Activated CD4-positive, alpha-beta T cell treated with anti-CD3 and anti-CD28 coated beads for 36 hours (primary cell): ENCODE measurements at regions of chr11 and their contacts with region 1.

Region 1: GRCh38 chr11:67630228-67630942 is 648 bp upstream of the NUDT8 start:
- DNase-seq: peak; percentile 99
- ATAC-seq: peak; percentile 79
- H3K4me3 Mint-ChIP-seq: peak overlapping the region; percentile 79
- H3K27ac Mint-ChIP-seq: peak overlapping the region; percentile 73
- H3K4me1 Mint-ChIP-seq: peaks cover 7% of the 10 kb centered on the region
- H3K27me3 Mint-ChIP-seq: no peaks in the 10 kb centered on the region

Region 2: GRCh38 chr11:67583247-67584204 is 46.9 kb before region 1 on chr11 and contains the start of gene GSTP1:
- CTCF ChIA-PET with region 1: interaction called, 4 read pairs
- POLR2A ChIA-PET with region 1: no interaction called
- intact Hi-C with region 1: loop called in 1 of 2 experiments (anchors 1 kb)
- DNase-seq: peak; percentile 90
- ATAC-seq: peak; percentile 85
- H3K4me3 Mint-ChIP-seq: peak within 1 kb of the TSS; percentile 89
- H3K27ac Mint-ChIP-seq: peak within 1 kb of the TSS; percentile 94
- H3K4me1 Mint-ChIP-seq: peaks cover 52% of the 10 kb centered on the region
- H3K27me3 Mint-ChIP-seq: peaks cover 10% of the 10 kb centered on the region
- total RNA-seq, gene GSTP1: 376 to 463 TPM

Region 3: DNA sequence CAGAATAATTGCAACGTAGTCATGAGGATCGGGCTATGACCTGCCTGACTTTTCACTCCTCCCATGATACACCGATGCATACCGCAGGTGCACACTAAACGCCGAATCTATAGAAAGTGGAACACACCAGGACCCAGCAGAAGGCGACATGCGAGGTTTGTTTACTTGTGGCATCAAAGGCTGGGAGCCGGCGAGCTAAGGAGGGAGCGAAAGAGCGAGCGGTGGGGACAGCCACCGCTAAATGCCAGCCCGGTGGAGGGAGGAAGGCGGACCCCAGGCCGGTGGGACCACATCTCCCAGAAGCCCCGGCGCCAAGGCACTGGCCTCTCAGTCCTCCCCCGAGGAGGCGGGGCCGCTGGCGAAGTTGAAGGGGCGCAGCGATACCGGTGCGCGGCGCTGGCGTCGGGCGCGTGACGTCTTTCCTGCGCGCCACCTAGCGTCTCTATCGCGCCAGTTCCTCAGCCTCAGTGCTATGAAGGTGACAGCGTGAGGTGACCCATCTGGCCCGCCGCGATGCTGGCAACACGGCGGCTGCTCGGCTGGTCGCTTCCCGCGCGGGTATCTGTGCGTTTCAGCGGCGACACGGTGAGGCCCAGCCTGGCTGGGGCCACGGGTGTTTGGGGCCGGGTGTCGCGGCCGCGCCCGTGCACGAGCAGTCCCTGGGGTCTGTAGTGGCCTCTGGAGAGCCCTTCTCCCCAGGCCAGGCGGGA is 23.7 kb before region 1 on chr11 and contains the start of gene NDUFV1:
- CTCF ChIA-PET with region 1: interaction called, 6 read pairs
- POLR2A ChIA-PET with region 1: no interaction called
- intact Hi-C with region 1: loop called (anchors 1 kb)
- DNase-seq: peak; percentile 98
- ATAC-seq: peak; percentile 100
- H3K4me3 Mint-ChIP-seq: peak within 1 kb of the TSS; percentile 92
- H3K27ac Mint-ChIP-seq: peak within 1 kb of the TSS; percentile 90
- H3K4me1 Mint-ChIP-seq: peaks cover 16% of the 10 kb centered on the region
- H3K27me3 Mint-ChIP-seq: peaks cover 9% of the 10 kb centered on the region
- total RNA-seq, gene NDUFV1: 253 to 287 TPM

Region 4: DNA sequence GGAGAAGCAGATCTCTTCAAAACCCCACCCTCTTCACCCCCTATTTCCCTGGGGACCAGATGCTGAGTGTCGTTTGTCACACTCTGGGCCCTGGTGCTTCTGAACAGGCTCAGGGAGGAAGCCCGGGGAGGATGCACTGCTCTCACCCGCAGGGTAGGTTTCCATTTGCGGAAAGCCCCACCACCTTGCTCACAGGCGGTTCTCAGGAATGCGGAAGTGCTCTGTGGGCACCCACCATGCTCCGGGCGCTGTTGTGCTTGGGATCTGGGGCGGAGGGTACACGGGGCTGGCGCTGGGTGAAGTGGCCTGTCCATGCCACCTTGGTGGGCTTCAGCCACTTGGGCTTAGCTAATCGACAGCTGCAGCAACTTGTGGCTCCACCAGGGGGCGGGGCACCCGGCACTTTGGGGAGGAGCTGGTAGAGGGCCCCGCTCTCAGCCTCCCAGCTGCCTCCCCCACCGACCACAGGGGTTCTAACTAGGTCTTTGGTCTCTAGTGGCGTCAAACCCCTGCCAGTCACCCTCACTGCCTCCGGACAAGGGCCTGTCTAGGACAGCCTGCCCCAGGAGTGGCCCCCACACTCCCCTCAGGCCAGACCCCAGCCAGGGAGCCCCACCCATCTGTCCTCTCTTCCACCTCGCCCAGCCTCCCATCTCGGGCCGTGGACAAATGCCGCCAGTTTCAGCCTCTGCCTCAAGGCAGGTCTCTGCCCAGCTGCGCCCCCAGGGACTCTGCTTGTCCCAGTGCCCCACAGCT is 16.2 kb before region 1 on chr11:
- CTCF ChIA-PET with region 1: interaction called, 67 read pairs
- POLR2A ChIA-PET with region 1: interaction called, 3 read pairs
- intact Hi-C with region 1: loop called (anchors 1 to 2 kb)
- DNase-seq: peak; percentile 92
- ATAC-seq: peak; percentile 90
- H3K4me3 Mint-ChIP-seq: peak overlapping the region; percentile 67
- H3K27ac Mint-ChIP-seq: peak overlapping the region; percentile 93
- H3K4me1 Mint-ChIP-seq: peaks cover 22% of the 10 kb centered on the region
- H3K27me3 Mint-ChIP-seq: no peaks in the 10 kb centered on the region

Region 5: DNA sequence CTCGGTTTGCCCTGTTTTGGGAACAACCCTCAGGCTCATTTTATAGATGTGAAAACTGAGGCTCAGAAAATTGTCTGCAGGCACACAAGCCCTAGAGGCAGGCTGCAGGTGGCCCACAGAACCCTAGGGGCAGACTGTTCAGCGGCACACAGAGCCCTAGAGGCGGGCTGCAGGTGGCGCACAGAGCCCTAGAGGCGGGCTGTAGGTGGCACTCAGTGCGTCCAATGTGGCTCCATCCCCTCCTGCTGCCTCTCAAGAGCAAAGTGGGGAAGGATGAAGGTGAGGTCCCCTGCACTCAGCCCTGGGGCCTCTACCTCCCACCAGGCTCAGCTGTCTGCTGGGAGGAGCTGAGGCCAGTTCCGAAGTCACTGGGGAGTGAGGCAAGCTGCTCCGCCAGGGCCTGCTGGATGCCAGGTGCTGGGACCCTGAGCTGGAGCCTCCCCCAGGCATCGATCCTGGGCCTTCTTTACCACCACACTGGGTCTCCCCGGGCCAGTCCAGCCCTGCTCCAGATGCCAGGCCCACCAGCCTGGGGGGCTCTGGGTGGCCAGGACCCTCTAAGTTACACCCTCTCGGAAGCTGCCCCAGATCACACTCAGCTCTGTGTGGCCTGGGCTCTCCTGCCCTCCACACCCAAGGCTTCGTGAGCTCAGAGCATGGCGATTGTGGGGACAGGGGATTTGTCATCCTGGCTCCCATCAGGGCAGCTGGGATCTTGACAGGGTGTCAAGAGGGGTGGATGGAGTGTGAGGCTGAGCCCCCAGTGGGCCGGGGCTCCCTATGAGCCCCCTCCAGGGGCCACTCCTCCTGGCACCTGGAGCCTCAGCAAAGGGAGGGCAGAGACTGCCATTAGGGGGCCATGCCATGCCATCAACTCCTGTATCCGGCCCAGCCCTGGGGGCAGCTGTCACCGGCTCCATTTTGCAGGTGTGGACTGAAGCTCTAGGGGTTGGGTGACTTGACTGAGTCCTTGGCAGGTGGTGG is 18.0 kb after region 1 on chr11:
- CTCF ChIA-PET with region 1: interaction called, 9 read pairs
- POLR2A ChIA-PET with region 1: interaction called, 4 read pairs
- intact Hi-C with region 1: loop called in 1 of 2 experiments (anchors 1 kb)
- DNase-seq: peak; percentile 84
- ATAC-seq: peak; percentile 93
- H3K4me3 Mint-ChIP-seq: no peak overlapping the region
- H3K27ac Mint-ChIP-seq: no peak overlapping the region
- H3K4me1 Mint-ChIP-seq: peaks cover 36% of the 10 kb centered on the region
- H3K27me3 Mint-ChIP-seq: no peaks in the 10 kb centered on the region

Region 6: DNA sequence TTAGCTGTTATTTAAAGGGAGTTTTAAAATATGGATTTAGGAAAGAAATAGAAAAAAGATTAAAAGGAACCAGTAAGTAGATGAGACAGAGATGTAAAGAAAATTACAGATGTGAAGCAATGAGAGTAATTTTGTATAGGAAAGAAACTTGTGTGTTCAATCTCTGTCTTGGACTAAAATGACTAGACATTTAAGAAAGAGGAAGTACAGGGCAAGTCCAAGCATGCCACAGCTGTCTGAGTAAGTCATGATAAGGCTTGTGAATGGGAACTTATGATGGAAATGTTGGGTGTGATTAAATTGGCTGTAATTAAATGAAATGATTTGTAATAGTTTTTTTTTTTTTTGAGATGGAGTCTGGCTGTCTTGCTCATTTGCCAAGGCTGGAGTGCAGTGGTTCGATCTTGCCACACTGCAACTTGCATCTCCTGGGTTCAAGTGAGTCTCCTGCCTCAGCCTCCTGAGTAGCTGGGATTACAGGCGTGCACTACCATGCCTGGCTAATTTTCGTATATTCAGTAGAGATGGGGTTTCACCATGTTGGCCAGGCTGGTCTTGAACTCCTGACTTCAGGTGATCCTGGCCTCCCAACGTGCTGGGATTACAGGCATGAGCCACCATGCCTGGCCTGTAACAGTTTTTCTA is 26.0 kb after region 1 on chr11:
- CTCF ChIA-PET with region 1: interaction called, 42 read pairs
- POLR2A ChIA-PET with region 1: interaction called, 4 read pairs
- intact Hi-C with region 1: loop called (anchors 1 kb)
- DNase-seq: no peak
- ATAC-seq: peak; percentile 37
- H3K4me3 Mint-ChIP-seq: no peak overlapping the region
- H3K27ac Mint-ChIP-seq: no peak overlapping the region
- H3K4me1 Mint-ChIP-seq: peaks cover 8% of the 10 kb centered on the region
- H3K27me3 Mint-ChIP-seq: peaks cover 3% of the 10 kb centered on the region

Region 7: GRCh38 chr11:67705264-67705663 is 74.9 kb after region 1 on chr11:
- CTCF ChIA-PET with region 1: interaction called, 3 read pairs
- POLR2A ChIA-PET with region 1: no interaction called
- intact Hi-C with region 1: loop called in 1 of 2 experiments (anchors 10 kb)
- DNase-seq: no peak
- ATAC-seq: no peak
- H3K4me3 Mint-ChIP-seq: no peak overlapping the region
- H3K27ac Mint-ChIP-seq: no peak overlapping the region
- H3K4me1 Mint-ChIP-seq: no peaks in the 10 kb centered on the region
- H3K27me3 Mint-ChIP-seq: peaks cover 3% of the 10 kb centered on the region